H1 (cell line): ENCODE measurements at regions of chr2 and their contacts with region 1.

Region 1: DNA sequence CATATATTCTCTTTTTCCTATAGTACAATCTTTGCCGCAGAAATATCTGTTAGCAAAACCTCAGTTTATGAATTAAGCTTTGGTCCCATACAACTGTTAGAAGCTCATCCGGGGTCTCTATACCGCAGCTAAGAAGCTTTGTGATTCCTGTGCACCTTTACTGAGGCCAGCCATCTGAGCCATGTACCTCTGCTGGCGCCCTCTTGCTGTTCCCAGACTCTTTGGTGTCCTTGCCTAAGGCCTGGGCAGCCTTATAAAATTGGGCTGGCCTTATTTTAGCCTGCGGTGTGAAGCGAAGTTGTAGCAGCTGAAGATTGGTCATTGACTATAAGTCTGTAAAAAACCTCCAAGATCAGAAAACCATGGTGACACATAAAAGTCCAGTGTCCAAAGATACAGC is 1135.1 kb upstream of the CHAC2 start:
- DNase-seq: no peak
- H3K4me3 ChIP-seq: no peak overlapping the region
- H3K27ac ChIP-seq: no peak overlapping the region
- H3K4me1 ChIP-seq: no peaks in the 10 kb centered on the region
- H3K27me3 ChIP-seq: no peaks in the 10 kb centered on the region
- CTCF ChIP-seq: peak; percentile 42 to 48 (median 45)
- EP300 ChIP-seq: no peak
- POLR2A ChIP-seq: no peak
- RAD21 ChIP-seq: peak; percentile 50 to 57; a peak in 3 of 4 replicates

Region 2: GRCh38 chr2:52220393-52220792 is 412.1 kb before region 1 on chr2:
- CTCF ChIA-PET with region 1: no interaction called
- POLR2A ChIA-PET with region 1: no interaction called
- DNase-seq: no peak
- H3K4me3 ChIP-seq: no peak overlapping the region
- H3K27ac ChIP-seq: no peak overlapping the region
- H3K4me1 ChIP-seq: no peaks in the 10 kb centered on the region
- H3K27me3 ChIP-seq: no peaks in the 10 kb centered on the region
- CTCF ChIP-seq: no peak
- EP300 ChIP-seq: no peak
- POLR2A ChIP-seq: no peak
- RAD21 ChIP-seq: no peak

Region 3: GRCh38 chr2:52622266-52622665 is 10.3 kb before region 1 on chr2:
- CTCF ChIA-PET with region 1: interaction called, 10 read pairs
- POLR2A ChIA-PET with region 1: no interaction called
- DNase-seq: no peak
- H3K4me3 ChIP-seq: no peak overlapping the region
- H3K27ac ChIP-seq: no peak overlapping the region
- H3K4me1 ChIP-seq: no peaks in the 10 kb centered on the region; a peak in 2 of 7 replicates
- H3K27me3 ChIP-seq: no peaks in the 10 kb centered on the region
- CTCF ChIP-seq: no peak
- EP300 ChIP-seq: no peak
- POLR2A ChIP-seq: no peak
- RAD21 ChIP-seq: no peak